ENCODE measurements at regions of chr12 and their contacts with region 1.

Region 1: GRCh38 chr12:94101738-94102660 is 46.4 kb upstream of the PLXNC1 start:
- DNase-seq: peak; percentile 74
- H3K27ac ChIP-seq: peak overlapping the region; percentile 79
- CTCF ChIP-seq: peak; percentile 77

Region 2: GRCh38 chr12:93502802-93503623 is 599.0 kb before region 1 on chr12:
- CTCF ChIA-PET with region 1: interaction called, 61 read pairs
- POLR2A ChIA-PET with region 1: no interaction called
- DNase-seq: peak; percentile 33
- H3K27ac ChIP-seq: no peak overlapping the region
- CTCF ChIP-seq: peak; percentile 85

Region 3: DNA sequence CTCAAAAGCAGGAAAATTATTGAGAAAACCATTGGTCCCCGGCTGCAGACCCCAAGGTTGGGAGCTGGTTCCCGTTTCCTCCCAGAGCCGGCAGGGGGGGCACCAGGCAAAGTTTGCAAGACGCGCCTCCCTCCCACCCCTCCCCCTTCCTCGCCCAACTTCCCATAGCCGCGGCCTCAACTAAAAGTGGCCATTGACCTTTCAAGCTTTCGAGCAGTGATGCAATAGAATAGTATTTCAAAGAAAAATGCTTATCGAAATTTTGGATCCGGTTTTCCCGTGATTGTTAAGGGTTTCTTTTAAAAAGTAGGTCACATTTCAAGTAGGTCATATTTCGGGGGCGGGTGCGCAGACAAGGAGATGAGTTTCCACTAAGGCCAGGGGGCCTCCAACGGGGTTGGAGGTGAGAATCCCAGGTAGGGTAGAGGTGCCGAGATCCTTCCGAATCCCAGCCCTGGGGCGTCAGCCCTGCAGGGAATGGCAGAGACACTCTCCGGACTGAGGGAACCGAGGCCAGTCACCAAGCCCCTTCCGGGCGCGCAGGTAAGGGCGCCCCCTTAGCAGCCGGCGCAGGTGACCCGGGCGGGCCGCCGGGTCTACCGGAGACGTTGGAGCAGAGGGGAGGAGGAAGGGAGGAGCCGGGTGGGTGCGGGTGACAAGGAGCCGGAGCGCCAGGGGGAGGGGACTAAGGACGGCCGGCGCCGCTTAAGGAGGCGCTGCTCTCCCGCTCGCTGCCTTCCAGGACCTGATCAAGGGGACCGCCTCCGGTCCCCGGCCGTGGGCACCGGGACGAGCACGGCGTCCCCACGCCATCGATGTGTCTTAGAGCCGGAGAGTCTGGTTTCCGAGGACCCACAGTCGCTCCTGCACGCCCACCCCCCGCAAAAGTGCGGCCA is 532.1 kb before region 1 on chr12:
- CTCF ChIA-PET with region 1: interaction called, 57 read pairs
- POLR2A ChIA-PET with region 1: interaction called, 3 read pairs
- DNase-seq: peak; percentile 91
- H3K27ac ChIP-seq: peak overlapping the region; percentile 88
- CTCF ChIP-seq: peak; percentile 80

Region 4: GRCh38 chr12:93742110-93742934 is 359.7 kb before region 1 on chr12:
- CTCF ChIA-PET with region 1: interaction called, 19 read pairs
- POLR2A ChIA-PET with region 1: no interaction called
- DNase-seq: peak; percentile 67
- H3K27ac ChIP-seq: peak overlapping the region; percentile 81
- CTCF ChIP-seq: peak; percentile 68

Region 5: GRCh38 chr12:93766796-93767523 is 335.0 kb before region 1 on chr12:
- CTCF ChIA-PET with region 1: interaction called, 37 read pairs
- POLR2A ChIA-PET with region 1: no interaction called
- DNase-seq: peak; percentile 55
- H3K27ac ChIP-seq: no peak overlapping the region
- CTCF ChIP-seq: peak; percentile 48

Region 6: DNA sequence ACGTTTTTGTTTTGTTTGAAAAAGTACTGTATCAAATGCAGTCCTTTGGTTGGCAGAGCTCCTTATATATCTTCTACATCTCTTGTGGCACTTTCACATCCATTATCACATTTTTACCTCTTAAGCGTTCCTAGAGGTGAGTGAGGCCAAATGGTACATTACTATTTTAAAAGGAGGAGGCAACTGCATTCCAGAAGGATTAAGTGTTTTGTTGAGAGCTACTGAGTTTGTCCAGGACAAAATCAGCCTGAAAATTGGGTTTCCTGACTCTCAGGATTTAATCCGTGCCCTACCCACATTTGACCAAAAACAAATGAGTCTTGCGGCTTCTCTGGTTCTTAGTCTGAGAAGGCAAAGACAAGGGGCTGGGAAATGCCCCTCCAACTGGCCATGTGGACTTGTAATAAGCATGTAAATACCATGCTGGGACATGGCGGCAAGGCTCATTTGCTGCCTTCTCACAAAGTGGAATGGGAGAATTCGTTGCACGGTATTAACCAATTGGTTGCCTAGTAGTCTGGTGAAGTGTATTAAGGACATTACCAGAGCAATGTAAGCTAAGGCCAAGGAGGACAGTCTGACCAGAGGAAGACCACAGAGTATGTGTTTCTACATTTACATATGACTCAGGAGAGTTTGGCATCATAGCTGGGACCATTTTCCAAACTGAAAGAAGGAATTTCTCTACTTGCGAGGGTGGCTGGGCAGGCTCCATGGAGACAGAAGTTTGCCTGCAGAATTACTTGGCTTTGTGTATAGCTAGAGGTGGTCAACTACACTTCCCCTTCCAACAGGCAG is 129.4 kb before region 1 on chr12:
- CTCF ChIA-PET with region 1: no interaction called
- POLR2A ChIA-PET with region 1: no interaction called
- DNase-seq: no peak
- H3K27ac ChIP-seq: no peak overlapping the region
- CTCF ChIP-seq: no peak

Region 7: GRCh38 chr12:94074980-94075928 is 26.7 kb before region 1 on chr12:
- CTCF ChIA-PET with region 1: interaction called, 10 read pairs
- POLR2A ChIA-PET with region 1: no interaction called
- DNase-seq: peak; percentile 73
- H3K27ac ChIP-seq: no peak overlapping the region
- CTCF ChIP-seq: peak; percentile 28; the same call in 1 of the 2 replicates